ENCODE measurements at regions of chr5 and their contacts with region 1.

Region 1: GRCh38 chr5:149636851-149637246 is 55.6 kb downstream of the ARHGEF37 start:
- DNase-seq: peak; percentile 63
- ATAC-seq: peak; percentile 73
- H3K4me3 ChIP-seq: no peak overlapping the region
- H3K27ac ChIP-seq: no peak overlapping the region
- H3K4me1 ChIP-seq: peaks cover 27% of the 10 kb centered on the region
- H3K27me3 ChIP-seq: no peaks in the 10 kb centered on the region
- CTCF ChIP-seq: peak; percentile 94
- EP300 ChIP-seq: no peak
- POLR2A ChIP-seq: no peak
- RAD21 ChIP-seq: peak; percentile 91

Region 2: GRCh38 chr5:149576021-149576420 is 60.8 kb before region 1 on chr5:
- CTCF ChIA-PET with region 1: no interaction called
- POLR2A ChIA-PET with region 1: no interaction called
- in situ Hi-C with region 1: no loop called
- intact Hi-C with region 1: no loop called
- DNase-seq: no peak
- ATAC-seq: no peak
- H3K4me3 ChIP-seq: no peak overlapping the region
- H3K27ac ChIP-seq: no peak overlapping the region
- H3K4me1 ChIP-seq: peaks cover 34% of the 10 kb centered on the region
- H3K27me3 ChIP-seq: peaks cover 0 to 19% of the 10 kb centered on the region in 2 experiments; a peak in 1 of 5 replicates
- CTCF ChIP-seq: no peak
- EP300 ChIP-seq: no peak
- POLR2A ChIP-seq: no peak
- RAD21 ChIP-seq: no peak

Region 3: DNA sequence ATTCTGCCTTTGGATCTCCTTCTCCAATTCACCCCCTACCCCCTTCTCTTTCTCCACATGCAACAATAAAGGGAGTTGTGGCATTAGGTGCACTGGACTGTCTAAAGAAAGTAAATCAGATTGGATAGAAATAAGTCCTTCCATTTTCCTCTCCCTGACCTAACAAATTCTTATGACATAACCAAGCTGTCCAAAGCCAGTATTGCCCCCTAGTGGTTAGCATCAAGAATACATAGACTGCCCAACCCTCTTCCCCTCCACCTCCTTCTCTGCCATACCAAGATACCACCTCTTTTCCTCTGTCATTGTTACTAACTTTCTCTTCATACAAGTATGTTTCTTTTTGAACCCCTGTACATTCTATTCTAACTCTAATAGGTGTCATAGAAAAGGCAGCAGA is 138.9 kb after region 1 on chr5:
- CTCF ChIA-PET with region 1: interaction called, 8 read pairs
- POLR2A ChIA-PET with region 1: no interaction called
- in situ Hi-C with region 1: no loop called
- intact Hi-C with region 1: loop called (anchors 5 kb)
- DNase-seq: peak; percentile 25
- ATAC-seq: peak; percentile 69; the same call in 2 of the 3 replicates
- H3K4me3 ChIP-seq: no peak overlapping the region
- H3K27ac ChIP-seq: no peak overlapping the region
- H3K4me1 ChIP-seq: no peaks in the 10 kb centered on the region
- H3K27me3 ChIP-seq: no peaks in the 10 kb centered on the region
- CTCF ChIP-seq: peak; percentile 47
- EP300 ChIP-seq: no peak
- POLR2A ChIP-seq: no peak
- RAD21 ChIP-seq: no peak

Region 4: GRCh38 chr5:149828161-149828884 is 191.5 kb after region 1 on chr5:
- CTCF ChIA-PET with region 1: interaction called, 46 read pairs
- POLR2A ChIA-PET with region 1: interaction called, 4 read pairs
- in situ Hi-C with region 1: loop called (anchors 5 kb)
- intact Hi-C with region 1: no loop called
- DNase-seq: peak; percentile 87
- ATAC-seq: peak; percentile 97
- H3K4me3 ChIP-seq: no peak overlapping the region
- H3K27ac ChIP-seq: no peak overlapping the region
- H3K4me1 ChIP-seq: no peaks in the 10 kb centered on the region
- H3K27me3 ChIP-seq: no peaks in the 10 kb centered on the region
- CTCF ChIP-seq: peak; percentile 95
- EP300 ChIP-seq: no peak
- POLR2A ChIP-seq: no peak
- RAD21 ChIP-seq: peak; percentile 86

Measured in HepG2 (cell line).